ENCODE measurements at regions of chr1 and their contacts with region 1.

Region 1: GRCh38 chr1:161082991-161083742 is 6.2 kb downstream of the NECTIN4 start:
- DNase-seq: peak; percentile 96 to 98
- H3K4me3 ChIP-seq: peak overlapping the region; percentile 4; the same call in 1 of the 2 replicates
- H3K27ac ChIP-seq: peak overlapping the region; percentile 81
- H3K4me1 ChIP-seq: peaks cover 75% of the 10 kb centered on the region
- H3K27me3 ChIP-seq: no peaks in the 10 kb centered on the region
- CTCF ChIP-seq: no peak

Region 2: DNA sequence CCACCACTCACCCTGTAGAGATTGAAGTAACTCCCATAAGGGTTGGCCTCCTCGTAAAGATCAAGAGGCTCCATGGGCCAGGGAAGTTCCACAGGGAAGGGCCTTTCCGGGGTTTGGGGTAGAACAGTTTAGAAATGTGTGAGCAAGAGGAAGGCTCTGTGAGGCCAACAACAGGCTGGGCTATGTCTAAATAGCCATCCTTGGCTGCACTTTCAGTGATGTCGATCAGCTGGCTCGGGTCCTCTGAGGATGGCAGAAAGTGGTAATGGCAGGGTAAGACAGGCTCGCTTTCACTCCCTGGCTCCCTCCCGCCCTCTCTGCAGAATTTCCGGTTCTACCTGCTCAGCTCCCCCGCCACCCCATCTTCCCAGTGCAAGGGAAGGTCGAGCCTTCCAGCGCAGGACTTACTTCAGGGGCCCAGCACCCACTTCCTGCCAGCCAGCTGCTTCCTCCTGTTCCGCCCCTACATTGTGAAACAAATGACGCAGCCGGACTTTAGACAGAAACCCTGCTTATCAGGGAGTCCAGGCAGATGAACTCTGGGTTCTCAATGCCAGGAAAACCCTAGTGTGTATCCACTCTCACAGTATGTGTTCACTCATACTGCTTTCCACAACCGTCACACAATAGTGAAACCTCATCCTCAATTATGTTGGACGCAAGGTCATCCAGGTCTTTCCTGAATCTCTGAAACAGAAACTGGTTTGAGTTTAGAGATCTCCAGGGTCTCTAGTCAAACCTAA is 69.5 kb before region 1 on chr1:
- CTCF ChIA-PET with region 1: no interaction called
- POLR2A ChIA-PET with region 1: no interaction called
- intact Hi-C with region 1: loop called (anchors 1 kb)
- DNase-seq: peak; percentile 88 to 97
- H3K4me3 ChIP-seq: peak overlapping the region; percentile 42; the same call in 1 of the 2 replicates
- H3K27ac ChIP-seq: peak overlapping the region; percentile 94
- H3K4me1 ChIP-seq: peaks cover 76% of the 10 kb centered on the region
- H3K27me3 ChIP-seq: no peaks in the 10 kb centered on the region
- CTCF ChIP-seq: no peak

Region 3: GRCh38 chr1:161045750-161046571 is 37.2 kb before region 1 on chr1 and contains the start of gene USF1:
- CTCF ChIA-PET with region 1: interaction called, 13 read pairs
- POLR2A ChIA-PET with region 1: interaction called, 4 read pairs
- intact Hi-C with region 1: loop called (anchors 2 kb)
- DNase-seq: peak; percentile 89 to 90
- H3K4me3 ChIP-seq: peak within 1 kb of the TSS; percentile 66
- H3K27ac ChIP-seq: peak within 1 kb of the TSS; percentile 85
- H3K4me1 ChIP-seq: peaks cover 15% of the 10 kb centered on the region
- H3K27me3 ChIP-seq: no peaks in the 10 kb centered on the region
- CTCF ChIP-seq: 0 out of 2 replicates have a peak, but pooled peaks have one; percentile 19
- total RNA-seq, gene USF1: 34.8 and 43.2 TPM in 2 replicates

Region 4: GRCh38 chr1:161051219-161051618 is 31.9 kb before region 1 on chr1:
- CTCF ChIA-PET with region 1: interaction called, 13 read pairs
- POLR2A ChIA-PET with region 1: interaction called, 17 read pairs
- intact Hi-C with region 1: no loop called
- DNase-seq: no peak
- H3K4me3 ChIP-seq: no peak overlapping the region
- H3K27ac ChIP-seq: no peak overlapping the region
- H3K4me1 ChIP-seq: peaks cover 8% of the 10 kb centered on the region
- H3K27me3 ChIP-seq: no peaks in the 10 kb centered on the region
- CTCF ChIP-seq: no peak

Region 5: GRCh38 chr1:161132410-161133219 is 49.4 kb after region 1 on chr1 and contains the start of gene DEDD:
- CTCF ChIA-PET with region 1: no interaction called
- POLR2A ChIA-PET with region 1: no interaction called
- intact Hi-C with region 1: no loop called
- DNase-seq: peak; percentile 84 to 92
- H3K4me3 ChIP-seq: peak within 1 kb of the TSS; percentile 66
- H3K27ac ChIP-seq: peak within 1 kb of the TSS; percentile 91
- H3K4me1 ChIP-seq: peaks cover 33% of the 10 kb centered on the region
- H3K27me3 ChIP-seq: no peaks in the 10 kb centered on the region
- CTCF ChIP-seq: no peak
- total RNA-seq, gene DEDD: 26.7 and 29.8 TPM in 2 replicates